ENCODE measurements at regions of chr18 and their contacts with region 1.

Region 1: DNA sequence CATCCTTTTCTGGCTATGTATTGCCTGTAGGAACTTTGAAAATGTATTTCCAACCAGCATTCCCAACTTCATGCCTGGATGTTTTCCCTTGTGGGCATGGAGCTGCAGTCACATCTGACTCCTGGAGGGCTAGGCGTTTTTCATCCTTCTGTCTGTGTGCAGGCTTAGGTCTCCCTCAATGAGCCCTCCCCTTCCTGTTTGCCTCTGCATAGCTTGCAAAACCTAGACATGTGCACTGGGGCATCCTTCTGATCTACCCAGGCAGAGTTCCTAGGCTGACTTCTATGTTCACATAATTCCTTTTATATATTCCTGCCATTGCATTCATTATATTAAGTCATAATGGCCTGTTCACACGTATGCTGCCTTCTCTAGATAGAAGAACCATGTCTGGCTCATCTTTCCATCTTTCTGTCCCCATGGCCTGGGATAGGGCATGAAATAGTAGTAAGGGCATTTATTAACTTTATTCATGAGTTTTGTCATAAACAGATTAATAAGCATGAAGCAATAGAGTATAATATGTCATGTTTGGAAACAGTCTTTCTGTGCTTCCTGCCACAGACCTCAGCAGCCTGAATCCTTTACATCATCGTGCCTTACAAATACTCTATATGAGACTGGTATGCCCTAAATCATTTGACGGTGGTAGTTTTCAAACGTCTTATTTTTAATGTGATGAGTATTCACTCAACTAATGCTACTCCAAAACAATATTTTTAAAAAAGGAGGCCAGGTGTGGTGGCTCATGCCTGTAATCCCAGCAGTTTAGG is 195.6 kb downstream of the TGIF1 start:
- DNase-seq: no peak

Region 2: DNA sequence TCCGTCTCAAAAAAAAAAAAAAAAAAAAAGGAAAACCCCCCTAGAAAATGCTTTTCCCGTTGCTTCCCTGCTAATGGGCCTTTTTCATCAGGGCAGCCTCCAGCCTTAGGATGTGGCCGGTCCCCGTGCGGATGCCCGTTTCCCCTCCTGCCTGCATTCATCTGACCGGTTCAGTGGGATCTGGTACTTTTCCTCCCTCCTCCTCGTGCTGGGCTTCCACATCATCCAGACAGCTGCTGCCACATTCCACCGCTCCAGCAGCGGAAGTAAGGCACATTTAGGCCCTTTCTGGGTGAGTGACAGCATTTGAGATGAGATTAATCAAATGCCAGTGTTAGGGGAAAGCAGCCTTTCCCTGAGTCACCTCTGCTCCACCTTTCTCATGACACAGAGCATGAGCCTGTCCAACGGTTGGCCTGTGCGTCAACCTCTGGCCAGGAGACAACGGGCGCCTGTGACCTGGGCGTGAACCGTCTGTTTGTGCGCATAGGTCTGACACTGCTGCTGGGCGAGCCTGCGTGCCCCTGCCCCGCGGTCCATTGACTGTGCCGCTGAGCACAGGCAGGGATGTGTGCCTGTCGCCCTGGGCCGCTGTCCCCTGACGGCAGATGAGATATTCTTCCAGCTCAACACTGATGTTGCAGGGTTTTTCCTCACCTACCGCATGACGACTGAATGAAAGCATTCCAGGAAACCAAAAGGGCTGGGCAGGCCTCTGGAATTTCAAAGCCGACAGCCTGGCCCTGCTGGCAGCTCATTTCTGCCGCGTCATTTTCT is 21.6 kb before region 1 on chr18:
- intact Hi-C with region 1: loop called in 1 of 2 experiments (anchors 1 kb)
- DNase-seq: peak; percentile 87